Cardiac septum (tissue), 1 donor: ENCODE measurements at regions of chr9 and their contacts with region 1.

Region 1: DNA sequence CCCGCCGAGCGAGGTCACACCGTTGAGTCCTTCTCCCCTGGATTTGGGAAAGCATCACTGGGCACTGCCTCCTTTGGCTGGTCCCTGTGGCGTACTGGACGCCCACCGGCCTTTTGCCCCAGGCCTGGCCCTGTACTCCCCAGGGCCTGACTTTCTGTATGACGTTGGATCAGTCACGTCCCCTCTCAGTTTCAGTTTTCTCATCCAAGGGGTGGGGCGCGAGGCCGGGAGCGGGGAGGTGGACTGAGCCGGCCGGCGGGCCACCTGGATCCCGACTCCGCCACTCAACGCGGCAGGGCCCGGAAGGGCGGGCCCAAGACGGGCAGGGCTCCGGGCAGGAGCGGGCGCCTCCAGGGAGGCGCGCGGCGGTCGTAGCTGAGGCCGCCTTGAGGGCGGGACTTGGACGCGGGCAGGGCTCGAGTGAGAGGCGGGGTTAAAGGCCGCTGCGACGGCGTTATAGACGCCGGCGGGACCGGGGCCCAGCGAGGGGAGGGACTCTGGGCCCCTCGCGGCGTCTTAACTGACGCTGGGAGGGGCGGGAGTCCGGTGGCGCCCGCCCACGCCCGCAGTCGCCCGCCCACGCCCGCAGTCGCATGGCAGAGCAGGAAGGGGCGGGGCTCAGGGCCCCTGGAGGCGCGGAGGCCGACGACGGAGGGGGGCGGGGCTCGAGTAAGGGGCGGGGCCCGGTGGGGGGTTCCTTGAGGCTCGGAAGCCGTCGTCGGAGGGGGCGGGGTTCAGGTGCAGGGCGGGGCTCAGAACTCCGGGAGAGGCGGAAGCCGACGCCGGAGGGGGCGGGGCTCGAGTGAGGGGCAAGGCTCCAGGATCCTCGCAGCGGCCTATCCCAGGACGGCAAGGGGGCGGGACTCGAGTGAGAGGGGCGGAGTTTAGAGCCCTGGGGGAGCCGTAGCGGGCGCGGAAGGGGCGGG is 549 bp upstream of the CARD19 start:
- DNase-seq: peak; percentile 100

Region 2: DNA sequence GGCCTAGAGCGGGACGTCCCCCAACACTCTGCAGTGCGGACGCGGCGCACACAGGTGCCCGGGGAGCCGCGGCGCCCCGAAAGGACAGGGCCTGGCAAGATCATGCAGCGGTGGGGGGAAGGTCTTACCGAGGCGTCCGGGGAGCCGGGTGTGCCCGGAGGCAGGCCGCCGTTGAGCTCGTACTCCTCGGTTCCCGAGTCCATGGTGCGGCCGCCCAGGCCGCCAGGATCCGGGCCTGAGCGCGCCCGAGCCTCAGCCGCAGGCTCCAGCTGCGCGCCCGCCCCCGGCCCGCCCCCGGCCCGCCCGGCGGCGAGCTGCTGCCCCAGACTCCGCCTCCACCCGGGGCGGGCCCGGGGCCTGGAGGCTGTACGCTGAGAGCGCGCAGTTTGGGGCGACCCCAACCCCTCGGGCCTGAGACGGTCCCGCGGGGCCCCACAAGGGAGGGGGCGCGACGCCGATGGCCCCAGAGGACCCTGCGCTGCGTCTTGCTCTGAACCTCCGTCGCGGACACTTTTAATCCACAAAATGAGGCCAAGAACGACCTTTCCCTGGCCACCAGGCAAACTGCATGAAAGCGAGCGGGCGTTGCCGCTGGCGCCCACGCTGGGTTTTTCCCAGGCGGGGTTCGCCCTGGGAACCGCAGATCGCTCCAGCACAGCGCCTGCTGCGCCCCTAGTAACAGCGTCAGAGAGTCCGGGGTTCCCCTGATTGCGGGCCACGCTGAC is 38.7 kb after region 1 on chr9 and contains the start of gene NINJ1:
- intact Hi-C with region 1: loop called (anchors 5 kb)
- DNase-seq: peak; percentile 89
- total RNA-seq, gene NINJ1: 46.4 TPM

Region 3: DNA sequence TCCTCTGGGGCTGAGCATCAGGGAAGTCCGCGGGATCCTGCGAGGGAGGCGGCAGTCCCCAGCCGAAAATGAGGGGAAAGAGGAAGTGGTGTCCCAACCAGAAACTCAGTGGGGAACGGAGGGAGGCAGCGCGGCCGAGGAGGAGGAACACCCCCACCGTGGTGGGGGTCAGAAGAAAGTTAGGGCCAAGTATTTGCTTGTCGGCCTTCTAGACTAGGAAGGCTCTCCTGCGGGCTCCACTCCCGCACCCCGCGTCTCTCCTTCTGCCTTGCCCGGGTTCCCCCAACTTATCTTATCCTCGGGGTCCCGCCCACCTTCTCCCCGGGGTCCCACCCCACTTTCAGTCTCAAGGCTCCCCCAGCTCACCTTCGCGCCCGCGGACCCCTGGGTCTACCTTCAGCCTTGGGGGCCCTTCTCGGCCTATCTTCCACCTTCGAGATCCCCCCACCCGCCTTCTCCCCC is 480.4 kb after region 1 on chr9:
- intact Hi-C with region 1: loop called (anchors 10 kb)
- DNase-seq: peak; percentile 84